ENCODE measurements at regions of chr19 and their contacts with region 1.

Region 1: GRCh38 chr19:39412100-39412866 is at the start of gene PLEKHG2:
- DNase-seq: peak; percentile 98
- H3K4me3 Mint-ChIP-seq: peak within 1 kb of the TSS; percentile 84
- H3K27ac Mint-ChIP-seq: peak within 1 kb of the TSS; percentile 88
- H3K4me1 Mint-ChIP-seq: peaks cover 34% of the 10 kb centered on the region
- H3K27me3 Mint-ChIP-seq: peaks cover 3% of the 10 kb centered on the region
- total RNA-seq, gene PLEKHG2: 74.9 to 80.6 TPM

Region 2: GRCh38 chr19:39212375-39212742 is 199.9 kb before region 1 on chr19:
- CTCF ChIA-PET with region 1: interaction called, 11 read pairs
- POLR2A ChIA-PET with region 1: no interaction called
- intact Hi-C with region 1: loop called (anchors 5 kb)
- DNase-seq: peak; percentile 80
- H3K4me3 Mint-ChIP-seq: no peak overlapping the region
- H3K27ac Mint-ChIP-seq: no peak overlapping the region
- H3K4me1 Mint-ChIP-seq: no peaks in the 10 kb centered on the region
- H3K27me3 Mint-ChIP-seq: peaks cover 4% of the 10 kb centered on the region

Region 3: GRCh38 chr19:39310558-39311311 is 101.5 kb before region 1 on chr19:
- CTCF ChIA-PET with region 1: no interaction called
- POLR2A ChIA-PET with region 1: no interaction called
- intact Hi-C with region 1: no loop called
- DNase-seq: no peak
- H3K4me3 Mint-ChIP-seq: no peak overlapping the region
- H3K27ac Mint-ChIP-seq: no peak overlapping the region
- H3K4me1 Mint-ChIP-seq: no peaks in the 10 kb centered on the region
- H3K27me3 Mint-ChIP-seq: no peaks in the 10 kb centered on the region

Region 4: GRCh38 chr19:39341719-39342604 is 70.3 kb before region 1 on chr19 and contains the start of gene SAMD4B:
- CTCF ChIA-PET with region 1: interaction called, 18 read pairs
- POLR2A ChIA-PET with region 1: no interaction called
- intact Hi-C with region 1: loop called (anchors 1 kb)
- DNase-seq: peak; percentile 100
- H3K4me3 Mint-ChIP-seq: peak within 1 kb of the TSS; percentile 98
- H3K27ac Mint-ChIP-seq: peak within 1 kb of the TSS; percentile 91
- H3K4me1 Mint-ChIP-seq: peaks cover 65% of the 10 kb centered on the region
- H3K27me3 Mint-ChIP-seq: no peaks in the 10 kb centered on the region
- total RNA-seq, gene SAMD4B: 49.4 to 51.3 TPM

Region 5: DNA sequence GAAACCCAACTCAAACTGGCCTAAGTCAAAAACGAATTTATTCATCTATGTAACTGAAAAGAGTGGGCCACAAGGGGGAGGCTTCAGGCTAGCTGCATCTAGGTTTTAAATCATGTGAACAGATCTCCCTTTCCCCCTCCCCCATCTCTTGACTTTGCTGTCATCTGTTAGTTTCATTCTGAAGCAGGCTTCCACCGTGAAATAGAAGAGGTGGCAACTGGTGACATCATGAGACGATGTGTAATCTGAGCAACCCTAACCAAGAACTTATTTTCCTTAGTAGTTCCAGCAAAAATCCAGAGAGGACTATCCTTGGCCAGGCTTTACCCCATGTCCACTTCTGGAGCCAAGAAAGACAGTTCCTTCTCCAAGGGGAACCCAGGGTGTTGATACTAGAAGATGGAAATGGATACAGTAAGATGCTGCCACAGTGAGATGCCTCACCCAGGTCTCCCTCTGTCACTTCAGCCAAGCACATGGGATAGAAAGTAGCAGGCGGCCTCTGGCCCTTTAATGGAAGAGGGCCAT is 60.7 kb before region 1 on chr19:
- CTCF ChIA-PET with region 1: interaction called, 18 read pairs
- POLR2A ChIA-PET with region 1: no interaction called
- intact Hi-C with region 1: loop called (anchors 1 kb)
- DNase-seq: peak; percentile 75
- H3K4me3 Mint-ChIP-seq: no peak overlapping the region
- H3K27ac Mint-ChIP-seq: peak overlapping the region; percentile 84
- H3K4me1 Mint-ChIP-seq: peaks cover 42% of the 10 kb centered on the region
- H3K27me3 Mint-ChIP-seq: no peaks in the 10 kb centered on the region

Region 6: GRCh38 chr19:39390755-39391592 is 21.3 kb before region 1 on chr19 and contains the starts of genes MED29 and PAF1:
- CTCF ChIA-PET with region 1: interaction called, 219 read pairs
- POLR2A ChIA-PET with region 1: interaction called, 23 read pairs
- intact Hi-C with region 1: loop called (anchors 1 kb)
- DNase-seq: peak; percentile 98
- H3K4me3 Mint-ChIP-seq: peak within 1 kb of the TSS; percentile 95
- H3K27ac Mint-ChIP-seq: peak within 1 kb of the TSS; percentile 99
- H3K4me1 Mint-ChIP-seq: peaks cover 40% of the 10 kb centered on the region
- H3K27me3 Mint-ChIP-seq: no peaks in the 10 kb centered on the region
- total RNA-seq, gene MED29: 22.2 to 26.9 TPM
- total RNA-seq, gene PAF1: 41.6 to 43.8 TPM

Region 7: DNA sequence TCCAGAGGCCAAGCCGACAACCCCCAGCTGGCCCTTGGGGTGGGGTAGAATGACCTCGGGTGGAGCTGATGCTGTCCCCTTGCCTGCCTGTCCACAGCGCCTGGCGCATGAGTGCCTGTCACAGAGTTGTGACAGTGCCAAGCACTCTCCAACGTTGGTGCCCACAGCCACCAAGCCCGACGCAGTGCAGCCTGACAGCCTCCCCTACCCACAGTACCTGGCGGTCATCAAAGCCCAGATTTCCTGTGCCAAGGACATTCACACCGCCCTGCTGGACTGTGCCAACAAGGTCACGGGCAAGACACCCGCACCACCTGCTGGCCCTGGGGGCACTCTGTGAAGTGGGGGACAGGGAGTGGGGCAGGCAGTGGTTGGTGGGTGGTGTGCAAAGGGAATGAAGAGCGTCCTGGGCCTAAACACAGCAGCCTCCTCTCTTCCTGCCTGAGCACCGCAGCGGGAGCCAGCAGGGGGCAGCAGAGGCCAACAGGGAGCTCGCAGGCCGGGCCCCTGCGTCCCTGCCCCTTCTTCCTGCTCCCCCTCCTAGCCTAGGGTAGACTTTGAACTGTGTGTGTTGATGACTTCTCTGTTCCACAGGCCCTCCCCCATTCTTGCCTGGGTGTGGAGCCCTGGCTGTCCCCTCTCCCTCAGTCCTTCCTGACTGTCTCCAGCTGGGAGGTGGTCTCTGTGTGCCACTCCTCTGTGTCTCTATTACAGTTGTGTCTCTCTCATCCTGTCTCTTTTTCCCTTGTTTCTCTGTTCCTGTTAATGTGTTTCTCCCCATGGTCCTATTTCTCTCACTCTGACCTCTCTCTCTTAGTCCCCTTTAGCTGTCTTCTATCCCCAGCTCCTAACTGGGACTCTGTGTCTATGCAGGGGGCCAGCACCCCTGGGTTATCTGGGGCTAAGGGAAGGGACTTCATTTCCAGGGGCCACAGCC is 14.7 kb before region 1 on chr19:
- CTCF ChIA-PET with region 1: interaction called, 219 read pairs
- POLR2A ChIA-PET with region 1: interaction called, 53 read pairs
- intact Hi-C with region 1: loop called (anchors 1 kb)
- DNase-seq: peak; percentile 96
- H3K4me3 Mint-ChIP-seq: peak overlapping the region; percentile 3
- H3K27ac Mint-ChIP-seq: peak overlapping the region; percentile 85
- H3K4me1 Mint-ChIP-seq: peaks cover 57% of the 10 kb centered on the region
- H3K27me3 Mint-ChIP-seq: no peaks in the 10 kb centered on the region